ENCODE measurements at regions of chr3 and their contacts with region 1.

Region 1: GRCh38 chr3:44482725-44483124 is 5.3 kb upstream of the ZNF445 start:
- DNase-seq: no peak
- H3K4me3 ChIP-seq: no peak overlapping the region
- H3K27ac ChIP-seq: no peak overlapping the region
- H3K27me3 ChIP-seq: no peaks in the 10 kb centered on the region
- CTCF ChIP-seq: no peak

Region 2: GRCh38 chr3:44601749-44602148 is 119.0 kb after region 1 on chr3:
- CTCF ChIA-PET with region 1: interaction called, 14 read pairs
- POLR2A ChIA-PET with region 1: no interaction called
- DNase-seq: no peak
- H3K4me3 ChIP-seq: no peak overlapping the region
- H3K27ac ChIP-seq: no peak overlapping the region
- H3K27me3 ChIP-seq: no peaks in the 10 kb centered on the region
- CTCF ChIP-seq: no peak

Region 3: GRCh38 chr3:44795197-44795596 is 312.5 kb after region 1 on chr3:
- CTCF ChIA-PET with region 1: no interaction called
- POLR2A ChIA-PET with region 1: no interaction called
- DNase-seq: no peak
- H3K4me3 ChIP-seq: no peak overlapping the region
- H3K27ac ChIP-seq: no peak overlapping the region
- H3K27me3 ChIP-seq: no peaks in the 10 kb centered on the region
- CTCF ChIP-seq: no peak

Measured in AG04450 (cell line).